BJ (cell line): ENCODE measurements at regions of chr6 and their contacts with region 1.

Region 1: DNA sequence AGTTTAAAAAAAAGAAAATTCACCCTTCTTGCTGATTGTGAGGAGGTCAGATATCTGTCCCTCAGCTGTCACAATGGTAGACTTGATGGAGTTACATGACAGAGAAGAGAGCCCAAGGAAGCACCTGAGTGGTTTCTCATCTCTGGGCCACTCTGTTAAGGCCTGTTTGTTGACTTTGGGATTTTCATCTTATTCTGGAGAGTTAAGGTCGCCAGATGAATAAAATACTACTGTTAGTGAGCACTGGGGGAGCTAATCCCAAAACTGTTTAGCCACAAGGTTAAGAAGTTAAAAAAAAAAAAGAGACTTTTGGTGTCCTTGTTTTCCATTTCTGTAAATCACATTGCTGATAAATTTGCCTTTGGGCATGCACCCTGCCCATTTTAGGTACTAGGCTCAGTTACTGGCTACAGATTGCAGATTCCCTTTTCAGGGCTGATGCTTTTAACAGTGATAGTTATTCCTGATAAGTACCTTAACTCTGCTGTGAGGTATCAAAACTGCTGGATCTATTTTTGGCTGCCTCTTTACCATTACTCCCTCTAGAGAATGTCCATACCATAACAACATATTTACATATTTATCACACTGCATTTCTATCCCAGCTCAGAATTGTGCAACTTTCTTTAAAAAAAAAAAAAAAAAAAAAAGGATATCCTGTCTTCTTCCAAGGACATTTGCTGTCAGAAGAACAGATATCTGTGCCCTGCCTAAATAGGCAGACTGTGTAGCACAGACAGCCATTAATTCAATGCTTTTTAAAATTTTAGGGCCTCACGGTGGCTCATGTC is 94.6 kb downstream of the SSR1 start:
- DNase-seq: no peak
- H3K4me3 ChIP-seq: no peak overlapping the region
- H3K27me3 ChIP-seq: no peaks in the 10 kb centered on the region
- CTCF ChIP-seq: 0 out of 2 replicates have a peak, but pooled peaks have one; percentile 4

Region 2: GRCh38 chr6:6875814-6876470 is 342.5 kb before region 1 on chr6:
- CTCF ChIA-PET with region 1: no interaction called
- POLR2A ChIA-PET with region 1: interaction called, 11 read pairs
- DNase-seq: peak; percentile 88
- H3K4me3 ChIP-seq: no peak overlapping the region
- H3K27me3 ChIP-seq: no peaks in the 10 kb centered on the region
- CTCF ChIP-seq: no peak

Region 3: DNA sequence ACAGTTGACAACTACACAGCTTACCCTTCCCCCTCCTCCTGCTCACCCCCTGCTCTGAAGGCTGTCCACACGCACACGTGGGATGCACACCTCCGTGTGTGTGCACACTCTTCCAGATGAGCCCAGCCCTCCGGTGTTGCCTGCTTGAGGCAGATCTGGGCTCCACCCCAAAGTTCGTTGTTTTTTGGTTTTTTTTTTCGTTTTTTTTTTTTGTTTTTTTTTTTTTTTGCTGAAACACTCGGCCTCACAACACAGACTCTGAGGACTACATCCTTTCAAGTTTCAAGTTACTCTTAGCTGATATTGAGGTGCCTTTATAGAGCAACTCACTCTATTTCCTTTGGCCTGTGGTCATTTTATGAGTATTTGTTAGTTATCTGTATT is 22.4 kb before region 1 on chr6:
- CTCF ChIA-PET with region 1: no interaction called
- POLR2A ChIA-PET with region 1: no interaction called
- DNase-seq: no peak
- H3K4me3 ChIP-seq: no peak overlapping the region
- H3K27me3 ChIP-seq: no peaks in the 10 kb centered on the region
- CTCF ChIP-seq: no peak